ENCODE measurements at regions of chr1 and their contacts with region 1.

Region 1: GRCh38 chr1:10507111-10507879 is 32.5 kb downstream of the PEX14 start:
- DNase-seq: no peak
- ATAC-seq: peak; percentile 74
- H3K4me3 ChIP-seq: no peak overlapping the region
- H3K27ac ChIP-seq: peak overlapping the region; percentile 38
- H3K4me1 ChIP-seq: peaks cover 27% of the 10 kb centered on the region
- H3K27me3 ChIP-seq: no peaks in the 10 kb centered on the region
- CTCF ChIP-seq: peak; percentile 84 to 95 (median 88)
- EP300 ChIP-seq: no peak
- POLR2A ChIP-seq: no peak
- RAD21 ChIP-seq: peak; percentile 87

Region 2: GRCh38 chr1:10522322-10522860 is 15.1 kb after region 1 on chr1:
- CTCF ChIA-PET with region 1: interaction called, 46 read pairs
- POLR2A ChIA-PET with region 1: interaction called, 3 read pairs
- RAD21 ChIA-PET with region 1: interaction called, 6 read pairs
- SMC1A ChIA-PET with region 1: interaction called, 21 read pairs
- in situ Hi-C with region 1: no loop called
- intact Hi-C with region 1: no loop called
- DNase-seq: no peak
- ATAC-seq: no peak
- H3K4me3 ChIP-seq: no peak overlapping the region
- H3K27ac ChIP-seq: no peak overlapping the region
- H3K4me1 ChIP-seq: 0 out of 2 replicates have a peak, but pooled peaks cover under 1% of the 10 kb centered on the region
- H3K27me3 ChIP-seq: no peaks in the 10 kb centered on the region
- CTCF ChIP-seq: no peak
- EP300 ChIP-seq: no peak
- POLR2A ChIP-seq: no peak
- RAD21 ChIP-seq: no peak

Region 3: GRCh38 chr1:10694633-10695627 is 187.6 kb after region 1 on chr1:
- CTCF ChIA-PET with region 1: interaction called, 24 read pairs
- POLR2A ChIA-PET with region 1: no interaction called
- RAD21 ChIA-PET with region 1: interaction called, 10 read pairs
- SMC1A ChIA-PET with region 1: interaction called, 10 read pairs
- in situ Hi-C with region 1: no loop called
- intact Hi-C with region 1: loop called (anchors 5 kb)
- DNase-seq: no peak
- ATAC-seq: peak; percentile 27
- H3K4me3 ChIP-seq: peak overlapping the region; percentile 44; the same call in 1 of the 2 replicates
- H3K27ac ChIP-seq: no peak overlapping the region
- H3K4me1 ChIP-seq: peaks cover 15% of the 10 kb centered on the region
- H3K27me3 ChIP-seq: no peaks in the 10 kb centered on the region; a peak in 1 of 4 replicates
- CTCF ChIP-seq: no peak
- EP300 ChIP-seq: no peak
- POLR2A ChIP-seq: no peak
- RAD21 ChIP-seq: no peak

Region 4: GRCh38 chr1:10873189-10873588 is 365.9 kb after region 1 on chr1:
- CTCF ChIA-PET with region 1: interaction called, 15 read pairs
- POLR2A ChIA-PET with region 1: no interaction called
- RAD21 ChIA-PET with region 1: interaction called, 4 read pairs
- SMC1A ChIA-PET with region 1: interaction called, 11 read pairs
- in situ Hi-C with region 1: loop called (anchors 5 kb)
- intact Hi-C with region 1: no loop called
- DNase-seq: no peak
- ATAC-seq: peak; percentile 52
- H3K4me3 ChIP-seq: no peak overlapping the region
- H3K27ac ChIP-seq: no peak overlapping the region
- H3K4me1 ChIP-seq: no peaks in the 10 kb centered on the region
- H3K27me3 ChIP-seq: peaks cover 0 to 1% of the 10 kb centered on the region in 2 experiments; a peak in 1 of 4 replicates
- CTCF ChIP-seq: no peak
- EP300 ChIP-seq: no peak
- POLR2A ChIP-seq: no peak
- RAD21 ChIP-seq: no peak

Region 5: DNA sequence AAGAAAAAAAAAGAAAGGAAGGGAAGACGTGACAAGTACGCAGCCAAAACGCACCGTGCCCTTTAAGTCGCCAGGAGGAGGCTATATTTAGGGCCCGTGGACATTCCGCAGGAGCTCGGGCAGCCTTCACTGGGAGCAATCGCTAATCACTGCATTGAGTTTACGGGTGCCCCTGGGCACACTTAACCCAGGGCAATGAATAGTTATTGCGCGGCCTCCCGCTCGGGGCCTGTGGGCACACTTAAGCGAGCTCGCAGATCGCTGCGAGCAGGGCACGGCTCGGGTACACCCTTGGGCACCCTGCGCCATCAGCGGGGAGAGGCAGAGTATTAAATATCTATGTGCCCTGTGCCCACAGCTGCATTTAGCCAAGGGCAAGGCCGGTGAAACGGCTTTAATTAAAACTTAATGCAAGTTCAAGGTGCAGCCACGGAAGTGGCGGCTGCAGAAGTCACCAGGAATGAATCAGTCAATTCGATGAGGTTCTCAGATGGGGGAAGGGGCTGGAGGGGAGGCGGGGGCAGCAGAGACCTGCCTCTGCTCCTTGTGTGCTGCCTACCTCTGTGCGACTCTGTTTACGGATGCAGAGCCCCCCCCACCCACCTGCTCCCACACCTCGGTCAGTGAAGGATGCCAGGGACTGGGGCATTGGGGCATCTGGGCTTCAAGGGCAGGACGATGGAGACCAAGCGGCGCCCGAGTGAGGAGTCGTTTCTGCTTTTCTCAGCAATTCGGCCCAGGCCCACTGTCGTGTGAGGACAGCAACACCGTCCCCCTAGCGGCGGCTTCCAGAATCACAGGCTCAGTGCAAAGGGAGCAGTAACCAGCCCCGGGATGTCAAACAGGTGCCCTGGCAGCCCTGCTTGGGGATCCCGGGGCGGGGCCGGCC is 453.4 kb after region 1 on chr1:
- CTCF ChIA-PET with region 1: interaction called, 5 read pairs
- POLR2A ChIA-PET with region 1: interaction called, 3 read pairs
- RAD21 ChIA-PET with region 1: interaction called, 4 read pairs
- SMC1A ChIA-PET with region 1: no interaction called
- in situ Hi-C with region 1: no loop called
- intact Hi-C with region 1: loop called (anchors 10 kb)
- DNase-seq: no peak
- ATAC-seq: peak; percentile 73
- H3K4me3 ChIP-seq: no peak overlapping the region
- H3K27ac ChIP-seq: no peak overlapping the region
- H3K4me1 ChIP-seq: peaks cover 31% of the 10 kb centered on the region
- H3K27me3 ChIP-seq: no peaks in the 10 kb centered on the region; a peak in 1 of 4 replicates
- CTCF ChIP-seq: peak; percentile 76 to 96 (median 94)
- EP300 ChIP-seq: no peak
- POLR2A ChIP-seq: no peak
- RAD21 ChIP-seq: peak; percentile 64

Measured in GM12878 (cell line).